Common myeloid progenitor, CD34-positive (primary cell): ENCODE measurements at regions of chr19 and their contacts with region 1.

Region 1: DNA sequence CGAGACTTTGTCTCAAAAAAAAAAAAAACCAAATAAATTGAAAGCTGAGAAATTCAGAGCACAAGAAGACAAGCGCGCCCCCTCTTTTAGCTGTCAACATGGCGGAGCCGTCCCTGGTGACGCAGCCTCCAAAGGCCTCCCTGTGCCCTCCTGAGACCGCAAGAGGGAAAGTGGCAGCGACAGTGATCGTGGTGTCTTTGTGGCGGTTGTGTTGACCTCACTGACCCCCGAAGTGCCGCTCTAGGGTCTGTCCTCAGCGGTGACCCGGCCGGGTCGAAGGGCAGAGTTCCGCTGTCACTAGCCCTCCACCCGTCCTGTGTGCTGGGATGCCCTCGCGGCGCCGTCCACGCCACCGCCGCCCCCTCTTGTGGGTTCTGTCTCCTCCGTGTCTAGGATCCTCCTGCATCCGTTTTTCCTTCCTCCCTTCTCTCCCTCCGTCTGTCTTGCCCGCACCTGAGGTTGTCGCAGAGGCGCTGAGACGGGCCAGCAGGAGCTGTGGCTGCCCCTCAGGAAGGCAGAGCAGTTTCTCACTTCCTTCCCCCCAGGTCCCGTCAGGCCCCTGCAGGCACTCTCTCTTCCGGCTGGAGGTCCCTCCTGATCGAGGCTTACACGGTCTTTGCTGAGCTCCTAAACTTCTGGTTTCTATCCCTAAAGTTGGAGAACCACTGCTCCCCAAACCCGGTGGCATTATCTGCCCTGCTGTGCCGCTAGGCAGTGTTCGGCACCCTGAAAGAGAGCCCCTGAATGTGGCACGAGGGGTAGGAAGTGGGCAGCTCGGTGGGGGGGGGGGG is 7.2 kb downstream of the UHRF1 start:
- DNase-seq: peak; percentile 56 to 82 (median 72)
- H3K4me3 ChIP-seq: peak overlapping the region; percentile 46 to 84 (median 63)
- H3K27ac ChIP-seq: peak overlapping the region; percentile 69 to 84
- H3K4me1 ChIP-seq: peaks cover 14 to 52% (median 50%) of the 10 kb centered on the region in 4 experiments
- H3K27me3 ChIP-seq: no peaks in the 10 kb centered on the region

Region 2: DNA sequence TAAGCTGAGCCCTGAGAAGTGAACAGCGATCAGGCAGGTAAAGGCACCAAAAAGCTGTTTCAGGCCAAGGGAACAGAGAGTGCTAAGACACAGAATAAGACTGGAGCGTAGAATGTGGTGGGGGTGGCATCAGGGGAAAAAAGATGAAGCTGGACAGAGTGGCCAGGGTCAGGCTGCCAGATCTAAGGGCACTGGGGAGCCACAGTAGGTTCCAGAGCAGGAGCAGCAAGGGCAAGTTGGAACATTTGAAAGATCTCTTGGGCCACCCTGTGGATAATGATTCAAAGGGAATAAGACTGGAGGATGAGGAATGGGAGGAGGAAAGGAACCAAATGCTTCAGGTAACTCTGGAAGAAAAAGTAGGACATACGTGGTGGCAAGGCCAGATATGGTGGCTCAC is 42.6 kb before region 1 on chr19:
- CTCF ChIA-PET with region 1: interaction called, 78 read pairs
- POLR2A ChIA-PET with region 1: no interaction called
- DNase-seq: no peak
- H3K4me3 ChIP-seq: no peak overlapping the region
- H3K27ac ChIP-seq: no peak overlapping the region
- H3K4me1 ChIP-seq: peaks cover 0 to 27% (median 20%) of the 10 kb centered on the region in 4 experiments
- H3K27me3 ChIP-seq: no peaks in the 10 kb centered on the region